CD4-positive, alpha-beta memory T cell (primary cell): ENCODE measurements at regions of chr16 and their contacts with region 1.

Region 1: DNA sequence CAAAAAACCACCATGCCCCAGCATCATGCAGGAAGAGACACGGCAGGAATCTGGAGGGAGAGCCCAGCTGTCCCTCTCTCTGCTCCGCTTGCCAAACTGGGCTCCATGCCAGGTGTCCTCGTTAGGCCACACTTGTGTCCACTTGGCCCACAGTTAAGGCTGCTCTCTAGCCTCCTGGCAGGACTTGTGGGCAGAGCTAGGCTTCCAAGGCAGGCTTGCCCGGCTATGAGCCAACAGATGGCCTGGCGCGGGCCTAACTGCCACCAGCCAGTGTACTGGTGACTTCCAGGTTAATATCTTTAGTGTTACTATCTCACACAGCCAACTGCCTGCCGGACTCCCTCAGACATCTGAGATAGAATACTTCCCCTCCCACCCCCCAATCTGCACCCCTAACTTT is 10.6 kb downstream of the ATP6V0D1 start:
- DNase-seq: no peak
- H3K4me3 ChIP-seq: no peak overlapping the region
- H3K4me3 Mint-ChIP-seq: no peak overlapping the region
- H3K27ac ChIP-seq: no peak overlapping the region
- H3K27ac Mint-ChIP-seq: peak overlapping the region in 1 of 7 donors; percentile 90
- H3K4me1 ChIP-seq: peaks cover 18% of the 10 kb centered on the region
- H3K4me1 Mint-ChIP-seq: peaks cover 31 to 61% (median 45%) of the 10 kb centered on the region in 4 donors
- H3K27me3 ChIP-seq: no peaks in the 10 kb centered on the region
- H3K27me3 Mint-ChIP-seq: no peaks in the 10 kb centered on the region

Region 2: DNA sequence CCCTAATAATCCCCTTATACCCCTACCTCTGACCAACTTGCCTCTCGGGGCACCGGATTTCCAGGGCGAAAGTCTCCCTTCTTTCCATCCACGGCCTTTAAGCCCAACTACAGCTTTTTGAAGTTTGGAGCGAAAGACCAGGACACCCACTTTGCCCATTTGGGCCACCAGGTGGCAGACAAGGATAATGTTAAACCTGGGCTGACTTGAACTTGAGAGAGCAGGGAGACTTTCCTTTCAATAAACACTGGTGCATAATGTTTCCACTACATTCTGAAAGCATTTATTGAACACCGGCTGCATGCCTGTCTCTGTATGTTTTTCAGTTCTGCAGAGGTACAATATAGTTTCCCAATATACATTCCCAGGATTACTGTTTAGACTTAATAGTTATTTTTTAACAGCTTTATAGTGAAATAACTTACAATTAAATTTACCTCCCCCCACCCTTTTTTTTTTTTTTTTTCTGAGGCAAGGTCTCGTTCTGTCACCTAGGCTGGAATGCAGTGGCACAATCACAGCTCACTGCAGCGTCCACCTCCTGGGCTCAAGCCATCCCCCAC is 516.2 kb before region 1 on chr16:
- CTCF ChIA-PET with region 1: no interaction called
- POLR2A ChIA-PET with region 1: no interaction called
- intact Hi-C with region 1: loop called (anchors 5 kb)
- DNase-seq: peak; percentile 63 to 73 (median 69)
- H3K4me3 ChIP-seq: no peak overlapping the region
- H3K4me3 Mint-ChIP-seq: no peak overlapping the region
- H3K27ac ChIP-seq: no peak overlapping the region
- H3K27ac Mint-ChIP-seq: peak overlapping the region in 1 of 7 donors; percentile 12
- H3K4me1 ChIP-seq: no peaks in the 10 kb centered on the region
- H3K4me1 Mint-ChIP-seq: peaks cover 2 to 7% (median 3%) of the 10 kb centered on the region in 4 donors
- H3K27me3 ChIP-seq: peaks cover 8% of the 10 kb centered on the region
- H3K27me3 Mint-ChIP-seq: peaks cover 25 to 33% of the 10 kb centered on the region in 2 donors

Region 3: GRCh38 chr16:67279296-67280089 is 190.9 kb before region 1 on chr16 and contains the start of gene PLEKHG4:
- CTCF ChIA-PET with region 1: no interaction called
- POLR2A ChIA-PET with region 1: no interaction called
- intact Hi-C with region 1: loop called (anchors 1 kb)
- DNase-seq: peak; percentile 74 to 80 (median 78)
- H3K4me3 ChIP-seq: peak within 1 kb of the TSS; percentile 52 to 68
- H3K4me3 Mint-ChIP-seq: peak within 1 kb of the TSS; percentile 81 to 89 (median 84)
- H3K27ac ChIP-seq: peak within 1 kb of the TSS; percentile 40
- H3K27ac Mint-ChIP-seq: peak within 1 kb of the TSS; percentile 57 to 92 (median 78)
- H3K4me1 ChIP-seq: peaks cover 20% of the 10 kb centered on the region
- H3K4me1 Mint-ChIP-seq: peaks cover 3 to 26% (median 15%) of the 10 kb centered on the region in 4 donors
- H3K27me3 ChIP-seq: no peaks in the 10 kb centered on the region
- H3K27me3 Mint-ChIP-seq: no peaks in the 10 kb centered on the region
- total RNA-seq, gene PLEKHG4: 17.3 to 24.0 TPM

Region 4: GRCh38 chr16:67428146-67428731 is 42.1 kb before region 1 on chr16:
- CTCF ChIA-PET with region 1: interaction called, 8 read pairs
- POLR2A ChIA-PET with region 1: no interaction called
- intact Hi-C with region 1: loop called (anchors 1 kb)
- DNase-seq: peak in 4 of 5 donors; percentile 30 to 41 (median 32)
- H3K4me3 ChIP-seq: no peak overlapping the region
- H3K4me3 Mint-ChIP-seq: no peak overlapping the region
- H3K27ac ChIP-seq: no peak overlapping the region
- H3K27ac Mint-ChIP-seq: no peak overlapping the region
- H3K4me1 ChIP-seq: peaks cover 4% of the 10 kb centered on the region
- H3K4me1 Mint-ChIP-seq: peaks cover 0 to 10% (median 7%) of the 10 kb centered on the region in 4 donors
- H3K27me3 ChIP-seq: peaks cover 26% of the 10 kb centered on the region
- H3K27me3 Mint-ChIP-seq: peaks cover 45 to 46% of the 10 kb centered on the region in 2 donors

Region 5: GRCh38 chr16:67697422-67698185 is 227.2 kb after region 1 on chr16:
- CTCF ChIA-PET with region 1: no interaction called
- POLR2A ChIA-PET with region 1: no interaction called
- intact Hi-C with region 1: no loop called
- DNase-seq: no peak
- H3K4me3 ChIP-seq: no peak overlapping the region
- H3K4me3 Mint-ChIP-seq: no peak overlapping the region
- H3K27ac ChIP-seq: no peak overlapping the region
- H3K27ac Mint-ChIP-seq: peak overlapping the region in 1 of 7 donors; percentile 22
- H3K4me1 ChIP-seq: peaks cover 1% of the 10 kb centered on the region
- H3K4me1 Mint-ChIP-seq: peaks cover 5 to 10% (median 6%) of the 10 kb centered on the region in 4 donors
- H3K27me3 ChIP-seq: no peaks in the 10 kb centered on the region
- H3K27me3 Mint-ChIP-seq: no peaks in the 10 kb centered on the region